Activated CD4-positive, alpha-beta T cell treated with anti-CD3 and anti-CD28 coated beads, Interleukin-2, amount 10 ng/mL, durations not matched to agents 7 days and 5 days (primary cell): ENCODE measurements at regions of chr1 and their contacts with region 1.

Region 1: DNA sequence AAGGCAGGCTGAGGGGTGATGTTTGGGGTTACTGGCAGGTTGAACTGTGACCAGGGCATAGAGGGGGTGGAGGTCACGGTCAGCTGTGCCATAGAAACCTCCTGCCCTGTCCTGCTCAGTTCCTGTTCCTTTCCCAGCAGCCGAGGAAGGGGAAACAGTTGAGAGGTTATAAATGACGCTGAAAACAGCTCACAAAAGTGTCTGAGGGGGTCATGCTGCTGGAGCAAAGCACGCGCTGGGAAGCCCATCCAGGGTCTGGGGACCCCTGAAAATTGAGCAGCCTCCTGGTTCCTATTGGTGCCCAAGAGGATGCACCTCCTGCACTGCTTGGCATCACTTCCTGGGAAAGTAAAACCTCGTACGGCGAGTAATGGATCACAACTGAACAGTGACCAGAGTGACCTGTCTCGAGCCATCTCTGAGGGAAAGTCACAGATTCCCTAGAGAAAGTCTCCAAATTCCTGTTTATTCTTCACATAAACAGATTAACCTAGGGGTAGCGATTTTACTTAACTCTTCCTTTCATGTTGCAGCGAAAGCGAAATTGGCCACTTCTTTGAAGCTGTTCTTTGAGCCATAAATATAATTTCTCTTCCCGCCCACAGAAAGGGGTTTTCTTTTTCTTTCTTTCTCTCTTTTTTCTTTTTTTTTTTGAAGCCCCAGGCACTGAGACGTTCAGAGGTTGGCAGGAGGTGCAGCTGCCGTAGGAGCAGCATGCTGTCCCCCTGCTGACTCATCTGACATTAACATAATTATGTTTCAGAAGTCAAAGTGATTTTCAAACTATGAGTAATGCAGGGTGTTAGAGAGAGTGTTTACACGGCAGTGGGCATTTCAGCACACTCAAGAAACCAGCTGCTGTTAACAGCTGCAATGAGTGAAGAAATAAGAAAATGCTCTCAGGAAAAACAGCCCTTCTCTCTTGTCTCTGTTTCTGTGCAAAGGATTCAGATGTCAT is 41.8 kb upstream of the ATF3 start:
- DNase-seq: peak; percentile 54
- H3K4me3 Mint-ChIP-seq: peak overlapping the region; percentile 86
- H3K27ac Mint-ChIP-seq: peak overlapping the region; percentile 99
- H3K4me1 Mint-ChIP-seq: peaks cover 27% of the 10 kb centered on the region
- H3K27me3 Mint-ChIP-seq: peaks cover 18% of the 10 kb centered on the region

Region 2: DNA sequence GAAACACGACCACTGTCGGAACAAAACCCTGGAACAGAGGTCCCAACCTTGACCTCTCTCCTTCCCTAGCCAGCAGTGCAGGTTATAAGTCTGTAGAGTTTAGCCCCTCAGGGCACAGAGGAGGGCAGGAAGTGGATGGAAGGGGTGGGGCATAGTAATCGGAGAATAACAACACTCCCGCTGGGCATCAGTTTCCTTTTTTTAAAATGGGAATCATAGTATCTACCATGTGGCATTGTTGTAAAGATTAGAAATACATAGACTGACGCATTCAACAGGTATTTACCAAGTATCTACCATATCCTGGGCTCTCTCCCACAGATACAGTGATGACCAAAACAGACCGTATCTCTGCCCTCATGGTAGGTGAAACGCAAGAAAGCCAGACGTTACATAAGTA is 16.8 kb after region 1 on chr1:
- CTCF ChIA-PET with region 1: interaction called, 10 read pairs
- POLR2A ChIA-PET with region 1: no interaction called
- DNase-seq: no peak
- H3K4me3 Mint-ChIP-seq: no peak overlapping the region
- H3K27ac Mint-ChIP-seq: no peak overlapping the region
- H3K4me1 Mint-ChIP-seq: peaks cover 8% of the 10 kb centered on the region
- H3K27me3 Mint-ChIP-seq: peaks cover 28% of the 10 kb centered on the region